HEK293 (cell line): ENCODE measurements at regions of chr2 and their contacts with region 1.

Region 1: DNA sequence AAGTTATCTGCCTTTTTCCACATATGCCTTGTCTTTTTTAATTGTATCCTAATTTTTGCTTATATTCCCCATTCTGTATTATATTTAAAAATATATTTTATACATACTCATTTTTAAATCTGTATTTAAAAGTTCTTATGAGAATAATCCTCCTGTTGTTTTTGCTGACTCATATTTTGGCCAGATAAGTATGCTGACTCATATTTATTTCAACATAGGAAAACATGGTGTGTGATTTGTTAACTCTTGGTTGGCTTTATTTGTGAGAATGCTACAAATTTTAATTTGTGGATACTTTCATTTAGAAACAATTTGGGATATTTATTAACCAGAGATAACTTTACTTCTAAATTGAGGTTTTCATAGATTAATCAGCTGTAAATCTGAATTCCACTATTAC is 587.7 kb downstream of the CPS1 start:
- H3K4me3 ChIP-seq: no peak overlapping the region
- H3K27ac ChIP-seq: no peak overlapping the region
- H3K4me1 ChIP-seq: no peaks in the 10 kb centered on the region
- CTCF ChIP-seq: no peak

Region 2: GRCh38 chr2:211157856-211158463 is 13.9 kb after region 1 on chr2:
- CTCF ChIA-PET with region 1: interaction called, 18 read pairs
- POLR2A ChIA-PET with region 1: no interaction called
- H3K4me3 ChIP-seq: no peak overlapping the region
- H3K27ac ChIP-seq: no peak overlapping the region
- H3K4me1 ChIP-seq: no peaks in the 10 kb centered on the region
- CTCF ChIP-seq: peak; percentile 19; the same call in 1 of the 2 replicates